HepG2 (cell line): ENCODE measurements at regions of chr22 and their contacts with region 1.

Region 1: DNA sequence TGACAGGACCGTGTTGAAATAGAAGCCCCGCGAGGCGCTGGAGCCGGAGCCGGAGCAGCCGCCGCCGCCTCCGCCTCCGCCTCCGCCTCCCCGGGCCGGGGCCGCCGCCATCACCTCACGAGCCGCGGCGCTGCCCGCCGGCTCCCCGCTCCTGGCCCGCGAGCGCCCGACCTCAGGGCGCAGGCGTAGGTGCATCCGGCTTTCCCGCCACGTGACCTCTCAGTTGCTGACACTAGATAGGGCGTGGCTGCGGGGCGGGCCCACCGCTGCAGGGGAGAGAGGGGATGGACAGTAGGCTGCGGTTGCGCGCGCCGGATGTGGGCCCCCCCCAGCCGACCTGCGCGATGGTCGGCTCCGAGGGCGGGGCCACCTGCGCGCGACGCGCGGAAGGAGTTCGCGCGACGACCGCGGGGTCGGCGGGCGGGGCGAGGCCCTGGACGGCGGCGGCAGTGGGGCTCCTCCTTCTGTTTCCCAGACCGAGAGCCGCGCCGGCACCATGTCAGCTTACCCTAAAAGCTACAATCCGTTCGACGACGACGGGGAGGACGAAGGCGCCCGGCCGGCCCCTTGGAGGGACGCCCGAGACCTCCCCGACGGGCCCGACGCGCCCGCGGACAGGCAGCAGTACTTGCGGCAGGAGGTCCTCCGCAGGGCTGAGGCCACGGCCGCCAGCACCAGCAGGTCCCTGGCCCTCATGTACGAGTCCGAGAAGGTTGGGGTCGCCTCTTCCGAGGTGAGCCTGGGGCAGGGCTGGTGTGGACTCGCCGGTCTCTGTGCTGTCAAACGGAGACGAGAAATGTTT is at the starts of genes PI4KA and SNAP29:
- DNase-seq: peak; percentile 95
- ATAC-seq: peak; percentile 89
- H3K4me3 ChIP-seq: peak within 1 kb of the TSS; percentile 79 to 84 (median 82)
- H3K27ac ChIP-seq: peak within 1 kb of the TSS; percentile 67
- H3K4me1 ChIP-seq: peaks cover 51% of the 10 kb centered on the region
- H3K27me3 ChIP-seq: no peaks in the 10 kb centered on the region; a peak in 1 of 5 replicates
- CTCF ChIP-seq: no peak; the same call in 1 of the 2 replicates
- EP300 ChIP-seq: peak in 1 of 2 experiments; percentile 50; a peak in 1 of 4 replicates
- POLR2A ChIP-seq: peak in 1 of 2 experiments; percentile 84; a peak in 2 of 4 replicates
- RAD21 ChIP-seq: peak; percentile 46
- total RNA-seq, gene PI4KA: 27.4 and 27.8 TPM in 2 replicates
- total RNA-seq, gene SNAP29: 12.3 and 15.2 TPM in 2 replicates

Region 2: DNA sequence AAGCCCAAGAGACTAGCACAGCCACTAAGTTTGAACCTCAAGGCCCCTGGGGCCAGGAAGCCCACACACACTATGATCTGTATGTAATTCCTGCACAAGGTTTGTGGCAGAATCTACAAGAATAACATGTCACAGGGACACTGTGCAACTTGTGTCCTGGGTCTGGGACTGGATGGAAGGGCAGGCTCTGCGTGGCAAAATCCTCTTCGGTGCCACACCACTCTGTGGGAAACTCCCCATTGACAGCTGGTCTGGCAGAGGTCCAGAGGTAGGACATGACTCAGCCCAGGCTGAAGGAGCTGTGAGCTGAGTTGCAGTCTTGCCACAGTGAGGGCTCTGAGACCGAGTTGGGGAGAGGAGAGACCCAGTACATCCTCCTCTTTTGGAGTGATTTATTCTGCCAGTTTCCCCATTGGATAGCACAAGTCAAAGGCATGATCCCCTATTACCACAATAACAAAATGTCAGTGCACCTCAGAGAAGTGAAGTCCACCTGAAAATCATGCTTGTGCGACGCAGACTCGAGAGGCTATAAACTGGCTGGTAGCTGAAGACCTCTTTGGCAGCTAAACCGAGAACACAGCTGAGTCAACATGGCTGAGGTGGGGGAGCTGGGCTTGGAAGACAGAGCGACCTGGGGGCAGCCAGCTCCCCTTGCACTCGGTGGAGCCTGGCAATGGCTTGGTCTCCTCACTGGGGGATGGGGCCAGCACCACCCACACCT is 108.2 kb before region 1 on chr22:
- CTCF ChIA-PET with region 1: no interaction called
- POLR2A ChIA-PET with region 1: no interaction called
- in situ Hi-C with region 1: no loop called
- intact Hi-C with region 1: no loop called
- DNase-seq: no peak
- ATAC-seq: no peak
- H3K4me3 ChIP-seq: no peak overlapping the region
- H3K27ac ChIP-seq: no peak overlapping the region
- H3K4me1 ChIP-seq: no peaks in the 10 kb centered on the region
- H3K27me3 ChIP-seq: no peaks in the 10 kb centered on the region
- CTCF ChIP-seq: no peak
- EP300 ChIP-seq: no peak
- POLR2A ChIP-seq: no peak
- RAD21 ChIP-seq: no peak

Region 3: GRCh38 chr22:20777420-20778177 is 81.2 kb before region 1 on chr22:
- CTCF ChIA-PET with region 1: no interaction called
- POLR2A ChIA-PET with region 1: interaction called, 3 read pairs
- in situ Hi-C with region 1: no loop called
- intact Hi-C with region 1: loop called (anchors 5 kb)
- DNase-seq: peak; percentile 99
- ATAC-seq: peak; percentile 76
- H3K4me3 ChIP-seq: peak overlapping the region in 1 of 3 experiments; percentile 70; a peak in 1 of 6 replicates
- H3K27ac ChIP-seq: peak overlapping the region; percentile 90
- H3K4me1 ChIP-seq: peaks cover 85% of the 10 kb centered on the region
- H3K27me3 ChIP-seq: no peaks in the 10 kb centered on the region
- CTCF ChIP-seq: peak; percentile 75
- EP300 ChIP-seq: peak; percentile 61 to 94; a peak in 3 of 4 replicates
- POLR2A ChIP-seq: peak; percentile 38 to 76; a peak in 3 of 4 replicates
- RAD21 ChIP-seq: peak; percentile 57; the same call in 1 of the 2 replicates

Region 4: GRCh38 chr22:20792947-20793294 is 65.9 kb before region 1 on chr22:
- CTCF ChIA-PET with region 1: no interaction called
- POLR2A ChIA-PET with region 1: interaction called, 5 read pairs
- in situ Hi-C with region 1: loop called (anchors 10 kb)
- intact Hi-C with region 1: no loop called
- DNase-seq: no peak
- ATAC-seq: no peak
- H3K4me3 ChIP-seq: no peak overlapping the region
- H3K27ac ChIP-seq: peak overlapping the region; percentile 92
- H3K4me1 ChIP-seq: peaks cover 75% of the 10 kb centered on the region
- H3K27me3 ChIP-seq: no peaks in the 10 kb centered on the region
- CTCF ChIP-seq: no peak
- EP300 ChIP-seq: no peak
- POLR2A ChIP-seq: no peak
- RAD21 ChIP-seq: no peak